Common myeloid progenitor, CD34-positive (primary cell): ENCODE measurements at regions of chr10 and their contacts with region 1.

Region 1: DNA sequence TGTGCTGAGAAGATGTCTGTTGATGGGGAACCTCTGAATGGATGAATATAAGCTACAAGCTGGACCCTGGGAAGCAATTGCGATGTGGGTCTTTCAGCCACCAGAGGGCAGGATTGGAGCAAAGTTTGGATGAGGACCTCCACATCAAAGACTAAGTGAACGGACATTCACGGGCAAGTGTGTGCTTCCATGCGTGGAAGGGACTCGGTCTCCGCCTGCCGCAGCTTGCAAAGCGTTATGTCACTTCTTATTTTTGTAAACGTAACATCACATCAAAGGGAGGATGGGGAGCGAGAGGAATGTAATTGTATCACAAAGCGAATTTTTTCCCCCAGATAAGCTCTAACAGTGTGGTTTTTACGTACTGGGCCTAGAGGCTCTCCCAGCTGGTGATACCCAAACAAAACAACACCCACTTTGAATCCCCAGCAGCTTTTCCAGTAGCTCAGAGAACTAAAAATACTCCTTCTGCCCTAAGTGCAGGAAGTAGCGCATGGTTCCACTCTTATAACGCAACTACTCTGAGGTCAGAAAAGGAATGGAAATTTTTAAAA is 65.0 kb downstream of the VWA2 start:
- DNase-seq: peak; percentile 81 to 88 (median 84)
- H3K4me3 ChIP-seq: peak overlapping the region; percentile 51 to 96 (median 79)
- H3K27ac ChIP-seq: peak overlapping the region in 1 of 2 experiments; percentile 39
- H3K4me1 ChIP-seq: peaks cover 5 to 13% (median 10%) of the 10 kb centered on the region in 4 experiments
- H3K27me3 ChIP-seq: peaks cover 0 to 3% (median 0%) of the 10 kb centered on the region in 5 experiments

Region 2: GRCh38 chr10:113158183-113158582 is 1145.9 kb before region 1 on chr10:
- CTCF ChIA-PET with region 1: no interaction called
- POLR2A ChIA-PET with region 1: no interaction called
- DNase-seq: no peak
- H3K4me3 ChIP-seq: no peak overlapping the region
- H3K27ac ChIP-seq: no peak overlapping the region
- H3K4me1 ChIP-seq: peaks cover 0 to under 1% (median 0%) of the 10 kb centered on the region in 4 experiments
- H3K27me3 ChIP-seq: no peaks in the 10 kb centered on the region

Region 3: GRCh38 chr10:114343623-114344505 is 39.8 kb after region 1 on chr10:
- CTCF ChIA-PET with region 1: interaction called, 12 read pairs
- POLR2A ChIA-PET with region 1: no interaction called
- DNase-seq: peak in 1 of 3 donors; percentile 14
- H3K4me3 ChIP-seq: no peak overlapping the region
- H3K27ac ChIP-seq: no peak overlapping the region
- H3K4me1 ChIP-seq: peaks cover 0 to 19% (median 11%) of the 10 kb centered on the region in 4 experiments
- H3K27me3 ChIP-seq: no peaks in the 10 kb centered on the region

Region 4: DNA sequence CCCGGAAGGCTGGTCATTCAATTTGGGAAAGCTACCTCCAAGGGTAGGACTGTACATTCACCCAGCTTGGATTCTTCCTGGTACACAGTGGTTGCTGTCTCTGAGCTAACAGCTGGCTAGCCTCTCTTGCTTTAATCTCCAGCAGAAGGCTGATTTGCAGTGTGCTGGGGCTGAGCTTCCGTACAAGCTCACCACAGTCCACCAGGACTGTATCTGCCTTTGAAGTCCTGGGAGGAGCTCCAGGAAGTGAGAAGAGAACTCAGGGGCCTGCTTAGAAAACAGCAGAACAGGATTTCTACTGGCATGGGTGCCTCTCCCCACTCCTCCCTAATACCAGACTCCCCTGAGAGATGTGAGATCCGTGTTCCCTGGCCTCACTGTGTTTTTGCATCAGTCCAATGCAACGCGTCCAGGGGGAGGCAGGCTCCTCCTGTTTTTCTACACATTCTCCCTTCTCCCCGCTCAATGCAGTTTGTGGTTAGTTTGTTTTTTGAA is 93.6 kb after region 1 on chr10:
- CTCF ChIA-PET with region 1: interaction called, 12 read pairs
- POLR2A ChIA-PET with region 1: no interaction called
- DNase-seq: peak in 1 of 3 donors; percentile 27
- H3K4me3 ChIP-seq: no peak overlapping the region
- H3K27ac ChIP-seq: no peak overlapping the region
- H3K4me1 ChIP-seq: peaks cover 3 to 31% (median 15%) of the 10 kb centered on the region in 4 experiments
- H3K27me3 ChIP-seq: peaks cover 0 to 28% (median 14%) of the 10 kb centered on the region in 5 experiments

Region 5: DNA sequence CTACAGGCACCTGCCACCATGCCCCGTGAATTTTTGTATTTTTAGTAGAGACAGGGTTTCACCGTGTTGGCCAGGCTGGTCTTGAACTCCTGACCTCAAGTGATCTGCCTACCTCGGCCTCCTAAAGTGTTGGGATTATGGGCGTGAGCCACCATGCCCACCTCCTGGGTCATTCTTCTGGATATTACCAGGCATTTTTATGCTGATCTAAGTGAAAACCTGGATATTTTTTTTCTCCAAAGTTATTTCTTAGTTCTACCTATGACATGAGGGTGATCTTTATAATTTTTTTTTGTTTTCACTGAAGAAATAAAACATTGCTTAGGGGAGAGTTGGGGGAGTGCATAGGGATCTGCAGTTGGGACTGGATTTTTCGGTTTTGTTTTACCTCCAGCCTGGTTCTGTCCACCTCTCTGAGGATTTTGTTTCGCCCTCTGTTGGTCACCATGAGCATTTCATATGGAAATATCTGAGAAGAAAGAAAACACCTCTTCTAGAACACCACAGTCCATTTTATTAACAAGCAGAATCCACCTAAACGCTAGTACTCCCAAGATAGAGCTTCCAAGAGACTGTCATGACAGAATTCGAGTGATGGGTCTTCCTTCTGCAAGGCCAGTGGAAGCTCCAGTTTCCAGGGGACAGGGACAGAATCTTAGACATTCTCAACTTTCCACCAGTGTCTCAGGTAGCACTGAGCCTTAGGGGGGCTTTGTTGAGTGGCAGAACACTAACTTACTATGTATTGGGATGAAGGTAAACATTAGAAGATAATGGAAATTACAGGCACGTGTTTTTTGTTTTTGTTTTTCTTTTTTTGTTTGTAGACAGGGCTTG is 133.6 kb after region 1 on chr10:
- CTCF ChIA-PET with region 1: interaction called, 79 read pairs
- POLR2A ChIA-PET with region 1: no interaction called
- DNase-seq: peak; percentile 15 to 52 (median 49)
- H3K4me3 ChIP-seq: no peak overlapping the region
- H3K27ac ChIP-seq: no peak overlapping the region
- H3K4me1 ChIP-seq: peaks cover 0 to 6% (median 0%) of the 10 kb centered on the region in 4 experiments
- H3K27me3 ChIP-seq: no peaks in the 10 kb centered on the region

Region 6: DNA sequence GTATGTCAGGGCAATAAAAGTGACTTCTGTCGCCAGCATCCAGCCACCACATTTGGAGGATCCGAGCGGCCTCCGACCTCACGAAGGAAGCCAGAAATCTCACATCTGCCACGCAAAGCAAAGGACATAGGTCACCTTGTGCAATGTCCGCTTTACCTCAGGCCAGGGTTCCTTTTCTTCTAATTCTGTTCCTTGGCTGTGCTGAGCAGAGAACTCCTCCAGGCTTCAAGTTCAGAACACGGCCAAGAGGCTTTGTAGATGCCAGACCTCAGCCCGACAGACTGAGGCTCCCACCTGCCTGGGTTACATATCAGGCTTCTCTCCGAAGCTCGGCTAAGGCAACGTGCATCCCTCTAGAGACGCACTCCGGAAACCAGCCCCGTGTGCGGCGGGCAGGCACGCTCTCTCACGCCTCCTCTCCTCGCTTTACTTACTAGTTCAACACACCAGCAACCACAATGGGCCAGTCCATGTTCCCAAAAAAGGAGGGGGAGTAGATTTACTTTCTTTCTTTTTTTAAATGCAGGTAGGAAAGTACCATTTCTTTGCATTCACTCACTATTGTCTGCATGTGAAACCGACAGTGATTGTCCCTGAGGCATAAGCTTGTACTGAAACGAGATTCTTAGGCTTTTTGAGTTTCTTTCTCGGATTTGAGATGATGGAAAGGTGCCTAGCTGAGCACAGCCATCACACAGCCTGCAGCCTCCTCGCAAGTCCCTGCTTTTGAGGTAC is 222.6 kb after region 1 on chr10:
- CTCF ChIA-PET with region 1: no interaction called
- POLR2A ChIA-PET with region 1: no interaction called
- DNase-seq: peak; percentile 93 to 98 (median 98)
- H3K4me3 ChIP-seq: peak overlapping the region in 6 of 7 experiments; percentile 51 to 77 (median 66)
- H3K27ac ChIP-seq: peak overlapping the region; percentile 56 to 72
- H3K4me1 ChIP-seq: peaks cover 17 to 53% (median 38%) of the 10 kb centered on the region in 4 experiments
- H3K27me3 ChIP-seq: no peaks in the 10 kb centered on the region

Region 7: GRCh38 chr10:114550756-114551635 is 246.9 kb after region 1 on chr10:
- CTCF ChIA-PET with region 1: interaction called, 11 read pairs
- POLR2A ChIA-PET with region 1: no interaction called
- DNase-seq: peak; percentile 31 to 55 (median 55)
- H3K4me3 ChIP-seq: no peak overlapping the region
- H3K27ac ChIP-seq: no peak overlapping the region
- H3K4me1 ChIP-seq: peaks cover 0 to 16% (median 4%) of the 10 kb centered on the region in 4 experiments
- H3K27me3 ChIP-seq: no peaks in the 10 kb centered on the region